Right ventricle myocardium inferior (tissue), 1 donor: ENCODE measurements at regions of chrX and their contacts with region 1.

Region 1: GRCh38 chrX:47193475-47194193 is at the start of gene UBA1:
- DNase-seq: peak; percentile 95
- ATAC-seq: peak; percentile 90
- total RNA-seq, gene UBA1: 93.5 TPM

Region 2: DNA sequence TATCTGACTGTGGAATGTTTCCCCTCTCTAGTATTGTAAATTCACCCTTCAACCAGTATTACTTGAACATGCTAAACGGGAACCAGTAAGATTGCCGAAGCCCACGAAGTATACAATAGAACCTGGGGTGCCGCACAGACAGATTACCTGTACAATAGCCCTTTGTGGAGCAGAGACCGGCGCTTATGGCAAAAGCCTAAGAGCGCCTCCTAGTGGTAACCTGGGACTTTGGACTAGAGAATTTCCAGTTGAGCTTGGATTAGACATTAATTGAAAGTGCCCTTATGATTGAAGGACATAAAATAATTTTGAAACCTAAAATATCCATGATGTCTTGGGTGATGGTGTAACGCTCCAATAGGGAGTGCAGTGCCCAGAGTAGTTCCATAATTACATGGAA is 190.9 kb after region 1 on chrX:
- intact Hi-C with region 1: loop called (anchors 1 kb)
- DNase-seq: no peak
- ATAC-seq: no peak

Region 3: GRCh38 chrX:47523297-47523696 is 329.7 kb after region 1 on chrX:
- intact Hi-C with region 1: loop called (anchors 2 kb)
- DNase-seq: peak; percentile 94
- ATAC-seq: peak; percentile 99

Region 4: DNA sequence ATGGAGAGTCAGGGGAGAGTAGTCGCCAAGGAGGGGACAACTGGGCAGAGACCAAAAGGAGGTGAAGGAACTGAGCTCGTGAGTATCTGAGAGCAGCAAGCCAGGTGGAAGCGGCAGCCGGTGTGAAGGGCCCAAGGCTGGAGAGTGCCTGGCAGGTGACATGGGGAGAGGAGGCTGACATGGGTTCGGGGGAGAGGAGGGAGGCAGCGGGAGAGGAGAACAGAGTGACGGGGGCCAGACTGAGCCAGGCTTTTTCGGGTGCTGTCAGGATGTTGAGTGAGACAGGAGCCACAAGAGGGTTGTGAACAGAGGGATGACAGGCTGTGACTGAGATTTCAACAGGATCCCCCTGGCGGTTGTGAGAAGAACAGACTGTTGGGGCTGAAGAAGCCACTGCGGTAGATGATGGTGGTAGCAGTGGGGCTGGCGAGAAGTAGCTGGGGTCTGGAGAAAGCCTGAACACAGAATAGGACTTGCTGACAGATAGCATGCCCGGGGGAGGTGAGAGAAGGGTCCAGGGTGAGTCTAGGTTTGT is 451.0 kb after region 1 on chrX:
- intact Hi-C with region 1: loop called (anchors 10 kb)
- DNase-seq: no peak
- ATAC-seq: peak; percentile 70